OCI-LY7 (cell line): ENCODE measurements at regions of chr16 and their contacts with region 1.

Region 1: GRCh38 chr16:53099318-53100130 is 44.7 kb downstream of the CHD9 start:
- DNase-seq: peak; percentile 70
- H3K4me3 ChIP-seq: peak overlapping the region; percentile 69
- H3K27ac ChIP-seq: peak overlapping the region; percentile 97
- H3K4me1 ChIP-seq: peaks cover 81% of the 10 kb centered on the region
- CTCF ChIP-seq: no peak

Region 2: DNA sequence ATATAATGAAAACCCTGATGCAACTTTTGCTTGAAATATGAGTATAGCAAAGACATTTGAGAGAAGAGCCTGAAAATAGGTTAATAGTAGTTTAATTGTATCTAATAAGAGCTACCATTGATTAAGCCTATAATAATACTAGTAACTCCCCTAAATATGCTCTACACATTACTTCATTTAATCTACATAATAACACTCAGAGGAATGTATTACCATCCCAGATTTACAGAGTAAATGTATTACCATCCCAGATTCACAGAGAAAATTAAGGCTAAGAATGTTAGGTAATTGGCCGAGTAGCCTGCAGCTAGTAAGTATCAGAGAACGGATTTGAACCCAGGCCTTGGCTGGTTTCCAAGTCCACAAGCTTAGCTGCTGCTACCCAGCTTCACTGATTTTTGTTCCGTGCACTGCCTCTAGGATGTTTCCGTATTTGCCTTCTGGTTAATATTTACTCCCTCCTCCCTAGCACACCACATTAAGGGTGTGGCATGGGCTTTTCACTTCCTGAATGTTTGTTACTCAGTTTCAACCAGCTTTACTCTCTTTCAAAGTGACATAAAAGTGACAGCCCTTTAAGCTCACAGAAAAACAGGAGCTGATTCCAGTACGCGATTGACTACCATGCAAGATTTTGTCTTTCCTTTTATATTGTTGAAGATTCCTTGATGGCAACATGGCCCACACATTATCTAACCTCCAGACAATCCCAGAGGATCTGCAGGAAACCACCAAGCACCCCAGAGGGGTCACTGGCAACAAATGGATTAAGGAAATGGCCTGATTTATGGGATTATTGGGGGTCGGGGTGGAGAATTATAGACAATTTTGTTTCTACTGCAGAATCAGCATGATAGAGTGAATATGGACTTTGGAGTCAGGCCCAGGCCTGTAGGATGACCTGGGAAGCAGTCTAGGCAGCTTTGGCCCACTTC is 525.9 kb before region 1 on chr16:
- CTCF ChIA-PET with region 1: no interaction called
- POLR2A ChIA-PET with region 1: no interaction called
- intact Hi-C with region 1: no loop called
- DNase-seq: no peak
- H3K4me3 ChIP-seq: no peak overlapping the region
- H3K27ac ChIP-seq: no peak overlapping the region
- H3K4me1 ChIP-seq: peaks cover 17% of the 10 kb centered on the region
- CTCF ChIP-seq: no peak

Region 3: GRCh38 chr16:52705122-52705521 is 394.4 kb before region 1 on chr16:
- CTCF ChIA-PET with region 1: no interaction called
- POLR2A ChIA-PET with region 1: no interaction called
- intact Hi-C with region 1: no loop called
- DNase-seq: no peak
- H3K4me3 ChIP-seq: no peak overlapping the region
- H3K27ac ChIP-seq: no peak overlapping the region
- H3K4me1 ChIP-seq: no peaks in the 10 kb centered on the region
- CTCF ChIP-seq: no peak

Region 4: GRCh38 chr16:52825892-52826291 is 273.6 kb before region 1 on chr16:
- CTCF ChIA-PET with region 1: no interaction called
- POLR2A ChIA-PET with region 1: no interaction called
- intact Hi-C with region 1: no loop called
- DNase-seq: no peak
- H3K4me3 ChIP-seq: no peak overlapping the region
- H3K27ac ChIP-seq: no peak overlapping the region
- H3K4me1 ChIP-seq: no peaks in the 10 kb centered on the region
- CTCF ChIP-seq: no peak

Region 5: DNA sequence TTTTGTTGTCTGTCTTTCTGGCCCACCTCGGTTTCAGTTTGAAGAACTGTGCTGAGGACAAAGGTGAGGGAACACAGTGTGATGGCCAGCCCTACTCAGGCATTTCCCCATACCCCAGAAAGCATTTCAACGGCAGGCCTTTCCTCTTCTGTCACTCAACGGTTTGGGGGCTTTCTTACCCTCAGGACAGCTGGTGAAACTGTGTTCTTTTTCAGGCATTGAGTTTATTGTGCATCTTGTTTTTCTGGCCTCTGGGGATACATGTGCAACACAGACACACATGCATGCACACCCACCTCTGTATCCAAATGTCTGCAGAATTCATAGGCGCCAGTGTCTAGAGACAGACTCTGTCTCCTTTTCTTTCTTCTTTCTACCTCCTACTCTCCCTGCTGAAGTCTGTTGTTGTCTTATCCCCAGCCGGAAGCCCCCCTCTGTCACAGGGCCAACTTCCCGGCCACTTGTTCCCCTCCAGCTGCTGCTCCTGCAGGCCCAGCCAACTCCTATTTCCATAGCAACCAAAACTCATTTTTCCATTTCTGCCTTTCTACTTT is 27.7 kb before region 1 on chr16:
- CTCF ChIA-PET with region 1: no interaction called
- POLR2A ChIA-PET with region 1: interaction called, 21 read pairs
- intact Hi-C with region 1: loop called (anchors 2 kb)
- DNase-seq: peak; percentile 84
- H3K4me3 ChIP-seq: peak overlapping the region; percentile 61
- H3K27ac ChIP-seq: peak overlapping the region; percentile 94
- H3K4me1 ChIP-seq: peaks cover 65% of the 10 kb centered on the region
- CTCF ChIP-seq: no peak